Motor neuron (in vitro differentiated cells): ENCODE measurements at regions of chr14 and their contacts with region 1.

Region 1: DNA sequence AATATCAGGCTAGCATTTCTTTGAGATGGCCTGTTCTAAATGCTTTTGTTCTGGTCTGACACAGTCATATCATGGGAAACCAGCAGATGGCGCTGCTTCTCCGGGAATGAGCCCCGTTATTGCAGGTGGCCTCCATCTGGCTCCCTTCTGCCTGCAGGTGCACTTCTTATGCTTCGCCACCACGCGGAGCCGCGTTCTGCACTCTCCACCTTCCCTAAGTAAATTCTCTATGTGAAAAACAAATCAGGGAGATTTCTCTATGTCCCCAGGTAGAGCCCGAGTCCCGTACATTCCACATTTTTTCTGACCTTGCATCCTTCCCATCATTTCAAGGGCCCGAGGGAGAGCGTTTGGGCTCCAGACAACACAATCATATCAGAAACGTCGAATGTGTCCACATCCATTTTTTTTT is 26.2 kb downstream of the GLRX5 start:
- ATAC-seq: peak; percentile 89 to 99 (median 99)
- H3K4me3 ChIP-seq: no peak overlapping the region
- H3K27ac ChIP-seq: no peak overlapping the region
- H3K4me1 ChIP-seq: no peaks in the 10 kb centered on the region

Region 2: DNA sequence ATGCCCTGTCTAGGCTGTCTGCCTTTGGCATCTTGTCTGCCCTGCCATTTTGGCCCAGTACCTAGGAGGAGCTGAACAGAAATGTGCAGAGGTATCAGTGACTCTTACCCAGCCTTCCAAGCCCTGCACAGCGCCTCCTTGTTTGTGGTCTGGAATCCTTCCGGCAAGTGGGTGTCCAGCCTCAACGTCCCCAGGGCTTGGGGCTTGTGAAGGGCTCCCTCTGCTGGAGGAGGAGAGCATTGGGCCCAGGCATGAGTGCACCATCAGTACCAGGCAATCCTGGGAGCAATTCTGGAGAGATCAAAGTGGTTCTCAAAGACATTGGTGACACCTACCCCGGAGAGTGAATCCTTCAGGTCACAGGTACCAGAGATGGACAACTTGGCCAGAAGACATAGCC is 122.8 kb after region 1 on chr14:
- in situ Hi-C with region 1: loop called in 1 of 9 experiments (anchors 25 kb)
- ATAC-seq: peak in 3 of 8 experiments; percentile 25 to 64 (median 44)
- H3K4me3 ChIP-seq: no peak overlapping the region
- H3K27ac ChIP-seq: no peak overlapping the region
- H3K4me1 ChIP-seq: peaks cover 7 to 13% of the 10 kb centered on the region in 2 donors

Region 3: GRCh38 chr14:95979339-95980042 is 418.5 kb after region 1 on chr14:
- in situ Hi-C with region 1: loop called in 2 of 9 experiments (anchors 10 kb)
- ATAC-seq: peak in 2 of 8 experiments; percentile 24 to 30
- H3K4me3 ChIP-seq: no peak overlapping the region
- H3K27ac ChIP-seq: no peak overlapping the region
- H3K4me1 ChIP-seq: peaks cover 9 to 14% of the 10 kb centered on the region in 2 donors

Region 4: DNA sequence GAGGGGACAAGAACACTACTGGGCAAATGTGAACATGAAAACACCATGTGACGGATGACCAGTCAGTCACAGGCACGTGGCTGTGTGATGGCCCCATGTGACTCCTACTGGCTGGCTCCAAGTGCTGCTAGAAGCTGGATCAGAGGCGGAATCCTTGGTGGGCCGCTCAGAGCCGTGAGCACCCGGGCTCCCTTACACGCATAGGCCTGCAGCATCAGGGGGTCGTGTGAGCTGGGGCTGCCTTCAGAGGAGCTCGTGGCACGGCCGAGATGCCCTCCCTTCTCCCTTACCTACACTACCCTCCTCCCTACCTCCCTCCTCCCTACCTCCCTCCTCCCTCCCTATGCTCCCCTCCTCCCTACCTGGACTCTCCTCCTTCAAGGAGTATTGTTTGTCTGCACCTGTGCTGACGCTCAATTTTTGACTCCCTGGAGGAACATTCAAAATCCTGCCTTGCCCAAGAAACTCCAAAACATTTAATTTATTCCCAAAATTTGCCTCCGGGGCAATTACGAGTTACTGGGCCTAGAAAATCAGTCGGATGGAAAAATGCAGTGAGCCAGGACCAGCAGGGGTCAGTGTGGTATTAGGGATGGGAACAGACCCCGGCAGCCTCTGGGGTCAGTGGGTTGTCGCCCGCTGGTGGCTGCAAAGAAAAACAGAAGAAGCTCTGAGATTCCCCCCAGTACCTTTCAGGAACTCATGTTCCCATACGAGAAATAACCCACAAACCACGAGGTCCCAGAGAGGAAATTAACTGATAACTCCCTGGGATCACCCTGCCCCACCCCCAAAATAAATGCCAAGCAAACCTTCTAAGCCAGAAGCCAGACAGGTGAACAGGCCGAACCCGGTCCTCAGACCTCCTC is 539.4 kb after region 1 on chr14:
- in situ Hi-C with region 1: loop called in 1 of 9 experiments (anchors 25 kb)
- ATAC-seq: peak; percentile 2 to 72 (median 37)
- H3K4me3 ChIP-seq: no peak overlapping the region
- H3K27ac ChIP-seq: no peak overlapping the region
- H3K4me1 ChIP-seq: peaks cover 8 to 19% of the 10 kb centered on the region in 2 donors

Region 5: GRCh38 chr14:96275177-96276112 is 714.4 kb after region 1 on chr14:
- in situ Hi-C with region 1: loop called in 3 of 9 experiments (anchors 10 to 25 kb)
- ATAC-seq: peak; percentile 58 to 93 (median 70)
- H3K4me3 ChIP-seq: no peak overlapping the region
- H3K27ac ChIP-seq: no peak overlapping the region
- H3K4me1 ChIP-seq: peaks cover 10 to 13% of the 10 kb centered on the region in 2 donors